Mammary epithelial cell (primary cell): ENCODE measurements at regions of chr19 and their contacts with region 1.

Region 1: GRCh38 chr19:33143897-33144405 is 12.0 kb downstream of the WDR88 start:
- DNase-seq: peak; percentile 25
- H3K4me3 ChIP-seq: no peak overlapping the region
- H3K27ac ChIP-seq: no peak overlapping the region
- H3K4me1 ChIP-seq: no peaks in the 10 kb centered on the region
- H3K27me3 ChIP-seq: no peaks in the 10 kb centered on the region
- CTCF ChIP-seq: peak; percentile 91 to 93

Region 2: GRCh38 chr19:32869966-32870573 is 273.9 kb before region 1 on chr19:
- CTCF ChIA-PET with region 1: no interaction called
- dilution Hi-C with region 1: no loop called
- in situ Hi-C with region 1: no loop called
- intact Hi-C with region 1: no loop called
- DNase-seq: no peak
- H3K4me3 ChIP-seq: no peak overlapping the region
- H3K27ac ChIP-seq: no peak overlapping the region
- H3K4me1 ChIP-seq: no peaks in the 10 kb centered on the region
- H3K27me3 ChIP-seq: no peaks in the 10 kb centered on the region
- CTCF ChIP-seq: no peak

Region 3: GRCh38 chr19:33176670-33177416 is 32.9 kb after region 1 on chr19:
- CTCF ChIA-PET with region 1: no interaction called
- dilution Hi-C with region 1: no loop called
- in situ Hi-C with region 1: loop called in 1 of 2 experiments (anchors 5 kb)
- intact Hi-C with region 1: loop called (anchors 1 kb)
- DNase-seq: peak; percentile 98
- H3K4me3 ChIP-seq: peak overlapping the region; percentile 56 to 80 (median 68)
- H3K27ac ChIP-seq: peak overlapping the region; percentile 74
- H3K4me1 ChIP-seq: peaks cover 18% of the 10 kb centered on the region
- H3K27me3 ChIP-seq: no peaks in the 10 kb centered on the region
- CTCF ChIP-seq: peak in 1 of 2 donors; percentile 20

Region 4: GRCh38 chr19:33186431-33187182 is 42.7 kb after region 1 on chr19:
- CTCF ChIA-PET with region 1: no interaction called
- dilution Hi-C with region 1: no loop called
- in situ Hi-C with region 1: loop called in 1 of 2 experiments (anchors 5 kb)
- intact Hi-C with region 1: loop called (anchors 1 kb)
- DNase-seq: no peak
- H3K4me3 ChIP-seq: no peak overlapping the region
- H3K27ac ChIP-seq: no peak overlapping the region
- H3K4me1 ChIP-seq: no peaks in the 10 kb centered on the region
- H3K27me3 ChIP-seq: no peaks in the 10 kb centered on the region
- CTCF ChIP-seq: no peak

Region 5: DNA sequence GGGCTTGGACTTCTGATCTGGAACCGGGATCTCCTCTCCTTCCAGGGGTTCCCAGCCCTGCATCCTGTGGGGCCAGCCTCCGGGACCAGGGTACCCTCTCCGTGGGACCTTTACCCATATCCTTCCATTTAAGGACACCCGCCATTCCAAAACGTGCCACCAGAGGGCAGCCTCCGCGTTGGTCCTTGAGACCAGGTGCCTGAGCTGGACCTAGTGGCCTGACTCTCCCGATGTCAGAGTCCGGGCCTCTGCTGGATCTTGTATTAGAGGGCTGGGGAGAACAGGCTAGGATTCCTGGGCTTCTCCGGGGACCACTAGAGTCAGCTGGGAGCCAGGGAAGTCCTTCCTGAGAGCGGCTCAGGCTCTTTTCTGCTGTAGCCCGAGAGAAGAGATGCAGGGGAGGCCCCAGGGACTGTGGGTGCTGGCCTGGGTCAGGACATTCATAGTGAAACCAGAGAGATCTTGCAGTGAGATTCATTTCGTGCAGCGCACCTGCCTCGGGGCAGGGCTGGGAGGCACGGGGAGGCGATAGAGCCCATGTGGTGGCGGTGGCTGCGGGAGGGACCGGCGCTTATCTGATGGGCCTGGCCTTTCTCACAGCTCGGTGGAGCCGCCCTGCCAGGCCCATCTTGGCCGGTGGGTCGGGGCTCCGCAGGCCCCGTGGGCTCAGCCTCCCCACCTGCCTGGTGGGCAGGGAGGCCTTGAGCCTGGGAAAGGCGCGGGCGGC is 91.5 kb after region 1 on chr19:
- CTCF ChIA-PET with region 1: no interaction called
- dilution Hi-C with region 1: no loop called
- in situ Hi-C with region 1: no loop called
- intact Hi-C with region 1: loop called (anchors 2 kb)
- DNase-seq: peak; percentile 30
- H3K4me3 ChIP-seq: no peak overlapping the region
- H3K27ac ChIP-seq: no peak overlapping the region
- H3K4me1 ChIP-seq: no peaks in the 10 kb centered on the region
- H3K27me3 ChIP-seq: no peaks in the 10 kb centered on the region
- CTCF ChIP-seq: peak; percentile 81 to 94